ENCODE measurements at regions of chr4 and their contacts with region 1.

Region 1: GRCh38 chr4:15479089-15479912 is 9.6 kb downstream of the CC2D2A start:
- DNase-seq: peak; percentile 77
- ATAC-seq: peak; percentile 93
- H3K4me3 ChIP-seq: peak overlapping the region; percentile 67 to 76 (median 73)
- H3K27ac ChIP-seq: peak overlapping the region; percentile 59
- H3K4me1 ChIP-seq: peaks cover 12% of the 10 kb centered on the region
- H3K27me3 ChIP-seq: no peaks in the 10 kb centered on the region
- CTCF ChIP-seq: peak; percentile 86
- EP300 ChIP-seq: no peak; a peak in 1 of 4 replicates
- POLR2A ChIP-seq: peak; percentile 54 to 59; a peak in 3 of 4 replicates
- RAD21 ChIP-seq: peak; percentile 84

Region 2: GRCh38 chr4:15681207-15682015 is 202.1 kb after region 1 on chr4 and contains the start of gene FAM200B:
- CTCF ChIA-PET with region 1: no interaction called
- POLR2A ChIA-PET with region 1: interaction called, 8 read pairs
- in situ Hi-C with region 1: no loop called
- intact Hi-C with region 1: loop called (anchors 1 kb)
- DNase-seq: peak; percentile 97
- ATAC-seq: peak; percentile 95
- H3K4me3 ChIP-seq: peak within 1 kb of the TSS; percentile 83 to 92 (median 90)
- H3K27ac ChIP-seq: peak within 1 kb of the TSS; percentile 94
- H3K4me1 ChIP-seq: peaks cover 65% of the 10 kb centered on the region
- H3K27me3 ChIP-seq: no peaks in the 10 kb centered on the region; a peak in 1 of 5 replicates
- CTCF ChIP-seq: peak; percentile 7; the same call in 1 of the 2 replicates
- EP300 ChIP-seq: peak in 1 of 2 experiments; percentile 48; a peak in 1 of 4 replicates
- POLR2A ChIP-seq: peak; percentile 86 to 88
- RAD21 ChIP-seq: peak; percentile 51
- total RNA-seq, gene FAM200B: 41.8 and 48.4 TPM in 2 replicates

Region 3: DNA sequence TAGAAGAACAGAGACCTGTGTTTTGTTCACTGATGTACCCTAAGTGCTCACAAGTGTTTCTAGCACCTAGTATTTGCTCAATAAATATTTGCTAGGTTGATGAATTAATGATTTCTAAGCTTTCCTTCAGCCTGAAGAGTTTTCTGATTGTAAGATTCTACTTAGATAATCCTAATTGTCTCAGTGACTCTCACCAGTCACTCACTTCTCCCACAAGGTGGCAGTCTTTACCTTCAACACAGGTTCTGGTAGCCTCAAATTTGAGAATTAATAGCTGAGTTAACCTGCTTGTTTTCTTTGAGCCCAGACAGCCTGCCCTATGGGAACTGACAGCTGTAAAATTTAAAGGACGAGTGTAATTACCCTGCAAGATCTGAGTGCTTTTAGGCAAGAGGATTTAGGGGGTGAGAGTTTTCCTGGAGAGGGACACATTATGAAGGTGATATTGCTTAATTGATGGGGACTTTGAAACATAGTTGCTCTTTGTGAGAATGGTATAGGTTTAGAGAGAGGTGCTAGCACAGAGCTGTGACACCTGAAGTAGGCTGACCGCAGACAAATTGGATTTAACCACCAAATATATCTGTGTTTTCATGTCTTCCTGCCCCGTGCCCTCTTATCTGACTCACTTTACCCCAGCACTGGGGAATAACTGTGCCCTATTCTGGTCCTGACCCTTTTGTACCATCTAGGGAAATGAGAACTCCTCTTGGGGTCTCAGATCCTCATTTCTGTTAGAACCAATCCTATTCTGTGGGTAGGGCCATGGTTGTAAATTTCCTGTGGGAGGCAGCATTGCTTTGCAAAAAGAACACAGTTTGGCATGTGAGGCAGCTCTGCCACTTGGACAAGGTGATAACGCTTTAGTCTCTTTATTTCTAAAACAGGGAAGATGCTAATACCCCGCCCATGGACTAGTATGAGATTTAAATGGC is 326.5 kb after region 1 on chr4:
- CTCF ChIA-PET with region 1: interaction called, 9 read pairs
- POLR2A ChIA-PET with region 1: no interaction called
- in situ Hi-C with region 1: no loop called
- intact Hi-C with region 1: loop called (anchors 1 kb)
- DNase-seq: peak; percentile 53
- ATAC-seq: peak; percentile 81
- H3K4me3 ChIP-seq: no peak overlapping the region
- H3K27ac ChIP-seq: no peak overlapping the region
- H3K4me1 ChIP-seq: no peaks in the 10 kb centered on the region
- H3K27me3 ChIP-seq: peaks cover 2 to 8% of the 10 kb centered on the region in 2 experiments; a peak in 2 of 5 replicates
- CTCF ChIP-seq: peak; percentile 76
- EP300 ChIP-seq: no peak
- POLR2A ChIP-seq: no peak
- RAD21 ChIP-seq: 0 out of 2 replicates have a peak, but pooled peaks have one; percentile 24

Region 4: GRCh38 chr4:15956179-15956850 is 477.0 kb after region 1 on chr4:
- CTCF ChIA-PET with region 1: interaction called, 15 read pairs
- POLR2A ChIA-PET with region 1: interaction called, 13 read pairs
- in situ Hi-C with region 1: loop called (anchors 5 kb)
- intact Hi-C with region 1: loop called (anchors 1 kb)
- DNase-seq: peak; percentile 72
- ATAC-seq: peak; percentile 98
- H3K4me3 ChIP-seq: no peak overlapping the region
- H3K27ac ChIP-seq: no peak overlapping the region
- H3K4me1 ChIP-seq: 0 out of 2 replicates have a peak, but pooled peaks cover 7% of the 10 kb centered on the region
- H3K27me3 ChIP-seq: peaks cover 0 to 18% of the 10 kb centered on the region in 2 experiments; a peak in 2 of 5 replicates
- CTCF ChIP-seq: peak; percentile 92
- EP300 ChIP-seq: no peak
- POLR2A ChIP-seq: no peak
- RAD21 ChIP-seq: peak; percentile 76

Region 5: DNA sequence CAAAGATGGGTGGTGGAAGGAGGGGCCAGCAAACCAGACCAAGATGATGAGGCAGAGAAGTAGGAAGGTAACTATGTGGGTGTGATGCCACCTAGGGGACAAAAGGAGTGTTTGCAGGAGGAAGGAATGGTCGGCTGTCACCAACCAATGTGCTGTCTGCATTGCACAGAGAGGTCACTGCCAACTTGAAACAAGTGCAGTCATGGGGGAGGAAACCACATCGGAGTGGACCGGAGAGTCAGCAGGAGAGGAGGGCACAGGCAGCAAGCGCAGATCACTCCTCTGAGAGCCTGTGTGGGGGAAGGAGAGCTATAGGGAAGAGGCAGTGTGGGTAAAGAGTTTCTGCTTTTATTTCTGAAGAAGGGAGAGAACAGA is 522.2 kb after region 1 on chr4:
- CTCF ChIA-PET with region 1: interaction called, 3 read pairs
- POLR2A ChIA-PET with region 1: interaction called, 4 read pairs
- in situ Hi-C with region 1: no loop called
- intact Hi-C with region 1: loop called (anchors 1 kb)
- DNase-seq: peak; percentile 43
- ATAC-seq: peak; percentile 98
- H3K4me3 ChIP-seq: no peak overlapping the region
- H3K27ac ChIP-seq: no peak overlapping the region
- H3K4me1 ChIP-seq: no peaks in the 10 kb centered on the region
- H3K27me3 ChIP-seq: no peaks in the 10 kb centered on the region
- CTCF ChIP-seq: peak; percentile 92
- EP300 ChIP-seq: no peak
- POLR2A ChIP-seq: no peak
- RAD21 ChIP-seq: peak; percentile 64

Measured in HepG2 (cell line).